ENCODE measurements at regions of chr2 and their contacts with region 1.

Region 1: GRCh38 chr2:17309741-17310339 is 208.4 kb downstream of the RAD51AP2 start:
- DNase-seq: peak; percentile 15
- H3K4me3 ChIP-seq: no peak overlapping the region
- H3K27ac ChIP-seq: no peak overlapping the region
- H3K4me1 ChIP-seq: no peaks in the 10 kb centered on the region
- H3K27me3 ChIP-seq: no peaks in the 10 kb centered on the region
- CTCF ChIP-seq: peak; percentile 32 to 61 (median 39)
- EP300 ChIP-seq: no peak
- POLR2A ChIP-seq: no peak

Region 2: DNA sequence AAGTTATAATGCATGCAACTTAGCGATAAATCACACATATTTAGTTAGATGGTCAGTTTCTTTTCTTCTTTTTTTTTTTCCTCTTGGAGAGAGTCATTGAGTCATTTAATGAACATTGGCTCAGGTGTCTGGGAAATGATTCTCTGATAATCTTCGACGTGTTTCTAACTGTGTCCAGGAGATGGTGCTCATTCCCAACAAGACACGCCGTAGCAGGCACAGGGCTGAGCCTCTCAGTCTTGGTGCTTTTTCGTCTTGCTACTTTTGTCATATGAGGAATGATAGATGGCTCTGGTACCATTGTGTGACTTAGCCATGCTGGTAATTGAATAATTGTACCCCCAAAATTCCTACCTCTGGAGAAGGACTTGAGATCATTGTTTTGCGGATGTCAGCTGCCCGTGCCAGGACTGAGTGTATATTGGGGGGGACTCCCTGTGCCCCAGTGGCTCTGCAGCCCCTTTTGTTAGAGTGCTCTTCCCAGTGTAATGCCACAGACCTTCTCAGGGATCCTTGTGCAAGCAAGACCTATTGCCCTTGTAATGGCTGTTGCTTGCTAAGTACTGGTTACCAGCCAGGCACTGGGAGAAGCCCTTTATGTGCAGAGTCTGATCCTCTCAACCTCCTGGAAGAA is 536.6 kb before region 1 on chr2:
- in situ Hi-C with region 1: loop called in 1 of 4 experiments (anchors 10 kb)
- intact Hi-C with region 1: no loop called
- DNase-seq: no peak
- H3K4me3 ChIP-seq: no peak overlapping the region
- H3K27ac ChIP-seq: no peak overlapping the region
- H3K4me1 ChIP-seq: no peaks in the 10 kb centered on the region
- H3K27me3 ChIP-seq: no peaks in the 10 kb centered on the region
- CTCF ChIP-seq: peak in 4 of 5 experiments; percentile 19 to 36 (median 25)
- EP300 ChIP-seq: no peak
- POLR2A ChIP-seq: no peak

Region 3: GRCh38 chr2:17181051-17181752 is 128.6 kb before region 1 on chr2:
- in situ Hi-C with region 1: no loop called
- intact Hi-C with region 1: no loop called
- DNase-seq: no peak
- H3K4me3 ChIP-seq: no peak overlapping the region
- H3K27ac ChIP-seq: no peak overlapping the region
- H3K4me1 ChIP-seq: no peaks in the 10 kb centered on the region
- H3K27me3 ChIP-seq: no peaks in the 10 kb centered on the region
- CTCF ChIP-seq: no peak
- EP300 ChIP-seq: no peak
- POLR2A ChIP-seq: no peak

Measured in transverse colon (tissue), 4 donors.